H1 (cell line): ENCODE measurements at regions of chr12 and their contacts with region 1.

Region 1: GRCh38 chr12:124767066-124767821 is 96.4 kb downstream of the SCARB1 start:
- DNase-seq: peak in 1 of 2 experiments; percentile 97
- H3K4me3 ChIP-seq: no peak overlapping the region
- H3K27ac ChIP-seq: no peak overlapping the region
- H3K4me1 ChIP-seq: peaks cover 0 to 6% (median 1%) of the 10 kb centered on the region in 4 experiments; a peak in 4 of 7 replicates
- H3K27me3 ChIP-seq: peaks cover 0 to 4% (median 0%) of the 10 kb centered on the region in 4 experiments; a peak in 2 of 7 replicates
- CTCF ChIP-seq: peak; percentile 90 to 94 (median 94)
- EP300 ChIP-seq: no peak
- POLR2A ChIP-seq: no peak
- RAD21 ChIP-seq: peak; percentile 97

Region 2: GRCh38 chr12:124661341-124661740 is 105.9 kb before region 1 on chr12:
- CTCF ChIA-PET with region 1: interaction called, 17 read pairs
- POLR2A ChIA-PET with region 1: no interaction called
- DNase-seq: no peak
- H3K4me3 ChIP-seq: no peak overlapping the region
- H3K27ac ChIP-seq: no peak overlapping the region
- H3K4me1 ChIP-seq: peaks cover 0 to 5% (median 2%) of the 10 kb centered on the region in 4 experiments; a peak in 4 of 7 replicates
- H3K27me3 ChIP-seq: no peaks in the 10 kb centered on the region
- CTCF ChIP-seq: peak; percentile 11 to 40 (median 28)
- EP300 ChIP-seq: no peak
- POLR2A ChIP-seq: no peak
- RAD21 ChIP-seq: peak in 1 of 2 experiments; percentile 27; a peak in 2 of 4 replicates

Region 3: DNA sequence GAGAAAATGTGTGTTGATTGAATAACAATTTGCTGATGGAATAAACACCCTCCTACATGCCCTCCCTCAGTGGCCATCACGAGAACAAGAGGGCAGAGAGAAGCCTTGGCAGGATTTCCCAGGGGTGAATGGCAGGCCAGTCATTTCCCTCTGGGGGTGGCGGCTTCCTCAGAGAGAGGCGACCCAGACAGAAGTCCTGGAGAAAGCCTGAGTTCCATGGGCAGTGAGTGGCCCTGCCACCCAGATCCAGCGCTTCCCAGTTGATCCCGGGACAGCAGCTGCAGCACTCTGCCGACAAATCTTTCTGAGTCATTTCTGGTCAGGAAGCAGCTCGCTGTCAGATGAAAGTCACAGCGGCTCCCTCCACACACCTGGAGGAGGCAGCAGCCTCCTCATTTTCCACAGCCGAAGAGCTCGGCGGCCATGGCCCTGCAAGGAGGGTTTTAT is 26.5 kb before region 1 on chr12:
- CTCF ChIA-PET with region 1: interaction called, 159 read pairs
- POLR2A ChIA-PET with region 1: interaction called, 4 read pairs
- DNase-seq: no peak
- H3K4me3 ChIP-seq: no peak overlapping the region
- H3K27ac ChIP-seq: no peak overlapping the region
- H3K4me1 ChIP-seq: peaks cover 0 to 9% (median 6%) of the 10 kb centered on the region in 4 experiments; a peak in 4 of 7 replicates
- H3K27me3 ChIP-seq: no peaks in the 10 kb centered on the region
- CTCF ChIP-seq: peak in 2 of 3 experiments; percentile 15 to 17; a peak in 2 of 4 replicates
- EP300 ChIP-seq: no peak
- POLR2A ChIP-seq: no peak
- RAD21 ChIP-seq: peak in 1 of 2 experiments; percentile 46; a peak in 2 of 4 replicates

Region 4: DNA sequence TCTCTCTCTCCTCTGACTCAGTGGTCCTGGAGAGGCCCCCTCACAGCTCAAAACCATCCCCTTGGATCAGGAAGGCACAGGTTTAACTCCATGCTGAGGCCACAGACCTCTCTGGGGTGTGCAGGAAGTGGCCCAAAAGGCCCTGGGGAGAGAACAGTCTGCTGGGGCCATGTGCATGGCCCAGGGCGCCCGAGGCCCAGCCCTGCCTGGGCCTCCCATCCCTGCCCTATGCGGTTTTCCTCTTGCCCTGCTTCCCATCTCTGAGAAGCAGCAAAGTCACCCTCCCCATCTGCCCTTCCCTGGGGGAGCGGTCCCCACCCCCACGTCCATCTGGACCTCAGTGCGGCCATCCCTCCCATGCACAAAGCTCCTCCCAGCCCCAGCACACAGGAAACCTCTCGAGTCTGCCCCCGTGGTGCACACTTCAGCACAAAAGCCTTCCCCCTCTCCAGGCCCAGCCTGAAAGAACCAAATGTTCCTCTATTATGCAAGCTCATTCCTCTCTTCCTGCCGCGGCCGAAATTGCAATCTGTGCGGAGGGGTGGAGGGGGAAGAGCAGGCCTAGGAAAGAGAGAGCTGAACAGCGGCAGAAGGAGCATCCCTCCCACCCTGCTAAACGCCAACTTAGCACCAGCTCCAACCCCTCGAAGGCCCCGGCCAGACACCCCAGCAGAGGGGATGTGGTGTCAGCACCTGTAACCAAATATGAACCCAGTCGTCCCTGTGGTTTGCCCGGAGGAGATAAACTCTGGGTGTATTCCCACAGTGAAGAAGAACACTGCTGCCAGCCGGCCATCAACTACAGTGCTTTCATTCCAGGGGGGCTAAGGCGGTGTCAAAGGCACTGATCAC is 12.1 kb before region 1 on chr12:
- CTCF ChIA-PET with region 1: interaction called, 146 read pairs
- POLR2A ChIA-PET with region 1: interaction called, 3 read pairs
- DNase-seq: peak in 1 of 2 experiments; percentile 27
- H3K4me3 ChIP-seq: no peak overlapping the region
- H3K27ac ChIP-seq: no peak overlapping the region
- H3K4me1 ChIP-seq: peaks cover 0 to 16% (median 9%) of the 10 kb centered on the region in 4 experiments; a peak in 6 of 7 replicates
- H3K27me3 ChIP-seq: peaks cover 0 to 2% (median 0%) of the 10 kb centered on the region in 4 experiments; a peak in 2 of 7 replicates
- CTCF ChIP-seq: no peak
- EP300 ChIP-seq: no peak
- POLR2A ChIP-seq: no peak
- RAD21 ChIP-seq: no peak